Posterior vena cava (tissue), 2 donors: ENCODE measurements at regions of chr11 and their contacts with region 1.

Region 1: DNA sequence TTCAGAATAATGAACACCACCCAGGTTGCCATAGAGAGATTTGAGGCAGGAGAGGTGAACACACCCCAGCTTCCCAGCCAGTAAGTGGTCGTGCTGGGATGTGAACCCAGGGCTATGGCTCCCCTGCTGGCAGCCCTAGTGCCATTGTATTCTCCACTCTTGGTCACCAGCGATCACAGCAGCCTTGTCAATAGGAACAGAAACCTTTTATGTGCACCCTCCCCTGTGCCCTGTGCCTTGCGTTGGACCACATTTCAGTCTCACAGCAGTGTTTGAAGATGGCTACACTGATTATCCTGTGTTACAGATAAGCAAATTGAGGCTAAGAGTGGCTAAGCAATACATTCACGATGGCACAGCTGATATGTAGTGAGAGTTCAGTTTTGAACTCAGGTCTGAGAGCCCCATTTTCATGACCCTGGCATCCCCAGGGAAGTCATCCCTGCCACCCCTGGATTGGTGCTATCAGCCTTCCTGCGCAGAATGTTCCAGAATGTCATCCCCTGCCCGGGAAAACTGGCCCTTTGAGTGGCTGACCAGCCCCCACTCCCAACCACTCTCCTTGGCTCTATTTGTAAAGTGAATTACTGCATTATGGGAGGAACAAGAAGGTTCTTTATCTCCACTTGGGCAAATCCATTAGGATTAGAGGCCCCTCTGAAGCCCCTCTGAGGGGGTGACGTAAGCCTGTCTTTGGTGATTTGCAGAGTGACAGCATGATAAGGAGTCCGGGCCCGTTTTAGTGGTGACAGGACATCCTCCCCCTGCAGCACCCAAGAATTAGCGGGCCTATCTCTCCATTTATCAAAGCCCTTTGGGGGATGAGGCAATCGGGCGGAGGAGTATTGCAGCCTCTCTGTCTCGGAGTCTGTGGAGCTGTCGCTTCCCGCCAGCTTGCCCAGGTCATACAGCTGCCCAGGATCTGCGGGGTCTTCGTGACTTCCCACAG is 30.9 kb downstream of the SMIM38 start:
- DNase-seq: no peak

Region 2: GRCh38 chr11:69211920-69212571 is 25.5 kb after region 1 on chr11:
- intact Hi-C with region 1: loop called in 1 of 2 experiments (anchors 2 kb)
- DNase-seq: peak; percentile 48

Region 3: DNA sequence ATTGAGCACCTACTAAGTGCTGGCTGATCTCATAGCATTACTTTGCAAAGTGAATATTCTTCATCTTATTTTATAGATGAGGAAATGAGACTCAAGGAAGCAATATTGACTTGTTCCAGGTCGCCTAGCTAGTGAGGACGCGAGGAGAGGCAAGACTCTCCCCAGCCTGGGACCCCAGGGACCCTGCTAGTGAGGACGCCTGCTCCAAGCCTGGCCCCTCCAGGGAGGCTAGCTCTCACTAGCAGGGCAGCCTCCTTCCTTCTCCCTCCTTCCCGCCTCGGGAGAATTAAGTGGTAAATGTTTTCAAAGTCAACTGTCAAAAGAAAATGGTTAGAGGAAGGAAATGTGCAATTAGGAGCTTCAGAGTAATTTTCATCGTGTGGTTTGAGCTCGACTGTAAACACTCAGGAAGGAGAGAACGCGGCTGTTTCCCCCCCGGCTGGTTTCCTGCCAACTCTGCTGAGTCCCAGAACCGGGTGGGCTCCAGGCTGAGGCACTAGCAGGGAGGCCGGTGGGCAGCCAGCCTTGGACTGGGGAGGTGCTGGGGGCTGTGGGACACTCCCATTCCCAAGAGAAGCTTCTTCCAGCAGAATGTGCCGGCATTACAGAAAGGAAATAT is 125.3 kb after region 1 on chr11:
- intact Hi-C with region 1: no loop called
- DNase-seq: peak; percentile 62